ENCODE measurements at regions of chr2 and their contacts with region 1.

Region 1: GRCh38 chr2:127197475-127198385 is 22.4 kb downstream of the CYP27C1 start:
- DNase-seq: peak; percentile 46 to 63
- ATAC-seq: peak in 7 of 8 donors; percentile 53 to 82 (median 78)
- H3K4me3 ChIP-seq: no peak overlapping the region
- H3K27ac ChIP-seq: no peak overlapping the region
- H3K4me1 ChIP-seq: peaks cover 0 to 14% (median 0%) of the 10 kb centered on the region in 9 donors
- H3K27me3 ChIP-seq: peaks cover 0 to 15% (median 11%) of the 10 kb centered on the region in 7 donors
- CTCF ChIP-seq: peak in 7 of 9 donors; percentile 30 to 53 (median 36)

Region 2: DNA sequence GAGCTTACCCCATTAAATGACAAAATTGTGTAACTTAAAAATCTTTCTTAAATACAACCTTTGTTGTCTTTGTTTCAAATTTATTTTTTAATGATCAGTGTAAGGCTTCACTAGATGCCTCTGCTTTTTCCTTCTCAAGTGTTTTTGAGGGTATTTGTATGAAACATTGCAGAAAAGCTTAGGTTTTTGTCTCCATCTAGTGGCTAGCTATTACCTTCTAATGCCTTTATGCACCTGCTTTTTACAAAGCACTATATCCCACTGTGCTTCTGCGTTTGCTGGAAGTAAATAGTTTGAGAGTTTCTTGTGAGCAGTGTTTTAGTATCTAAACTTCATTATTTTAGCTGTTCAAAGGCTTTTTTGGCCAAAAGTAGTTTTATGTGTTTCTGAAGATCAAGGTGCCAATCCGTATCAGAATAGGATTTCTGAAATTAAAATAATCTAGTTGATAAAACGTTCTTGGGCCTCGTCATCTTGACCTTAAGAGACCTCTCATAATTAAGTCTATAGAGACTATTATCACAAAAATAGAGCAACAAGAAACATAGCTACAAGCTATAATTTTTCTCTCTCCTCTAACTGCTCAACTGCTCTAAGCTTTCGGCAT is 281.6 kb after region 1 on chr2:
- intact Hi-C with region 1: loop called in 2 of 10 experiments (anchors 5 to 10 kb)
- DNase-seq: no peak
- ATAC-seq: peak in 6 of 8 donors; percentile 43 to 65 (median 55)
- H3K4me3 ChIP-seq: no peak overlapping the region
- H3K27ac ChIP-seq: no peak overlapping the region
- H3K4me1 ChIP-seq: no peaks in the 10 kb centered on the region
- H3K27me3 ChIP-seq: no peaks in the 10 kb centered on the region
- CTCF ChIP-seq: peak; percentile 35 to 78 (median 66)

Region 3: GRCh38 chr2:127486247-127487058 is 288.7 kb after region 1 on chr2:
- intact Hi-C with region 1: loop called in 2 of 10 experiments (anchors 5 to 10 kb)
- DNase-seq: no peak
- ATAC-seq: no peak
- H3K4me3 ChIP-seq: no peak overlapping the region
- H3K27ac ChIP-seq: no peak overlapping the region
- H3K4me1 ChIP-seq: peaks cover 0 to 16% (median 0%) of the 10 kb centered on the region in 9 donors
- H3K27me3 ChIP-seq: no peaks in the 10 kb centered on the region
- CTCF ChIP-seq: no peak

Region 4: GRCh38 chr2:128654408-128654807 is 1456.7 kb after region 1 on chr2:
- intact Hi-C with region 1: no loop called
- DNase-seq: peak in 1 of 2 donors; percentile 24
- ATAC-seq: peak in 5 of 8 donors; percentile 44 to 67 (median 51)
- H3K4me3 ChIP-seq: no peak overlapping the region
- H3K27ac ChIP-seq: peak overlapping the region in 1 of 10 donors; percentile 66
- H3K4me1 ChIP-seq: no peaks in the 10 kb centered on the region
- H3K27me3 ChIP-seq: peaks cover 0 to 4% (median 0%) of the 10 kb centered on the region in 7 donors
- CTCF ChIP-seq: no peak

Measured in heart right ventricle (tissue), 16 donors.